ENCODE measurements at regions of chr22 and their contacts with region 1.

Region 1: DNA sequence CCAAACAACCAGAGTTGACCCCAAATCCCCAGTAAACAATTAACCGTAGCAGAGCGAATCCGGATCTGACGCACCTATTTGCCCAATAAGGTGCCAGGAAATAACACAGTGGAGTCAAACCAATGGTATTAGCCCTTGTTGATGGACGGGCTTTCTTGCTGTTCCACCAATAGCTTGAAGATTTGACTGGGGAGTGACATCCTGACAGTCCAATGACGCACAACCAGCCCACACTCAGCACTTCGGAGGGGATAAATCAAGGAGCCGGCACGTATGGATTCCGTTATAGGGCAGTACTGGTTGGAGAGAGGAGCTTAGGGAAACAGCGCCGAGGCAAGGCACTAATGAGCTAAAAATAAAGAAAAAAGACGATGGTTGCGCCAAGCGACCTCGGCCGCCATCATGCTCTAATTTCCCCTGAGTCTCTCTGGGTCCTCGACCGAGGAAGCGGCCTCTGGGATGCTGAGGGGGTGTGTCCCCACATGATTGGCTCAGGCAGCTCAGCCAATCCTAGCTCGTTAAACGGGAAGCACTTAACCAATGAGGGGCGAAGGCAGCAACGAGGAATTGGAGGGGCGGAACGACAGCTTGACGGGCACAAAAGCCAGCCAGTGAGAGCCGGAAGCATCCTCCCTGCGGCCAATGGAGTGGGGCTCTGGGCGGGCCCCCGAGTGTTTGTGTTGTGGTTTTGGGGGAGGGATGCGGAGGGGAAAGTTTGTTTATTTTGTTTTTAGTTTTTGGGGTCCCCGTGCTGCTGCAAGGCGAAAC is 49.5 kb downstream of the FAM83F start:
- DNase-seq: peak; percentile 94 to 99 (median 98)
- ATAC-seq: peak; percentile 89 to 94 (median 92)
- H3K4me3 ChIP-seq: peak overlapping the region; percentile 52 to 83 (median 72)
- H3K27ac ChIP-seq: peak overlapping the region; percentile 76 to 93 (median 86)
- H3K4me1 ChIP-seq: peaks cover 5 to 16% (median 14%) of the 10 kb centered on the region in 3 donors
- H3K27me3 ChIP-seq: no peaks in the 10 kb centered on the region
- CTCF ChIP-seq: no peak

Region 2: GRCh38 chr22:39985383-39986035 is 58.8 kb before region 1 on chr22:
- intact Hi-C with region 1: no loop called
- DNase-seq: no peak
- ATAC-seq: no peak
- H3K4me3 ChIP-seq: no peak overlapping the region
- H3K27ac ChIP-seq: no peak overlapping the region
- H3K4me1 ChIP-seq: peaks cover 0 to 4% (median 0%) of the 10 kb centered on the region in 3 donors
- H3K27me3 ChIP-seq: peaks cover 0 to 2% (median 0%) of the 10 kb centered on the region in 4 donors
- CTCF ChIP-seq: no peak

Region 3: GRCh38 chr22:40183029-40183581 is 138.8 kb after region 1 on chr22:
- intact Hi-C with region 1: loop called in 1 of 3 experiments (anchors 10 kb)
- DNase-seq: no peak
- ATAC-seq: peak in 3 of 4 donors; percentile 17 to 35 (median 20)
- H3K4me3 ChIP-seq: peak overlapping the region in 1 of 4 donors; percentile 5
- H3K27ac ChIP-seq: peak overlapping the region in 2 of 4 donors; percentile 57 to 64
- H3K4me1 ChIP-seq: peaks cover 20 to 75% (median 64%) of the 10 kb centered on the region in 3 donors
- H3K27me3 ChIP-seq: no peaks in the 10 kb centered on the region
- CTCF ChIP-seq: no peak